ENCODE measurements at regions of chr10 and their contacts with region 1.

Region 1: GRCh38 chr10:13971601-13972475 is 358.9 kb downstream of the FRMD4A start:
- DNase-seq: no peak

Region 2: DNA sequence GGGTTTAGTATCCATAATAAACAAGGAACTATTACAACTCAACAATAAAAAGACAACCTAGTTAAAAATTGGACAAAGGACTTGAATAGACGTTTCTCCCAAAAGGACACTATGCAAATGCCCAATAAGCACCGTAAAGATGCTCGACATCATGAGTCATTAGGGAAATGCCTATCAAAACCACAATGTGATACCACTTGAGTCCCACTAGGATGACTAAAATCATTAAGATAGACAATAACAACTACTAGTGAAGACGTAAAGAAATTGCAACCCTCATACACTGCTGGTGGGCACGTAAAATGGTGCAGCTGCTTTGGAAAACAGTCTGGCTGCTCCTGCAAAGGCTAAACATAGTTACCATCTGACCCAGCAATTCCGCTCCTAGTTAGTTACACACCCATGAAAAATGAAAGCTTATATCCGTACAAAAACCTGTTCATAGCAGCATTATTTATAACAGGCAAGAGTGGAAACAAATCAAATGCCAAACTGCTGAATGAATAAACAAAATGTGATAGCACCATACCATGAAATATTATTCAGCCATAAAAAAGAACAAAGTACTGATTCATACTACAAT is 987.6 kb before region 1 on chr10:
- intact Hi-C with region 1: no loop called
- DNase-seq: no peak

Region 3: DNA sequence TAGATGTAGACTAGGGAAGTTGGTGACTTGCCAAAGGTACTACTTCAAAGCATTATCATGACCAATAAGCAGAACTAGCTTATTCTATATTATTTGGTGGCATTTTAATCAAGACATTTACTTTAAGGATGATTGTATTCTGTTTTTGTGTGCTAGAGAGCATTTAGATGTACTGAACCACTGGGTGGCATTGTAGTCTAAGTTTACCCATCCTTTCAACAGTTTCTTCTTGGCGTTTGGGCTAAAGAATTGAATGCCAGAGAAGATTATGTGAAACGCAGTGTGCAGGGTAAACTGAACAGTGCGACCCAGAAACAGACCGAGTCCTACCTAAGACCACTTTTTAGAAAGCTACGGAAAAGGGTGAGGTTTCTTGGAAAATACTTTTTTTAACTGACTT is 358.3 kb before region 1 on chr10:
- intact Hi-C with region 1: loop called (anchors 10 kb)
- DNase-seq: no peak

Region 4: GRCh38 chr10:14003517-14004184 is 31.8 kb after region 1 on chr10:
- intact Hi-C with region 1: loop called (anchors 5 kb)
- DNase-seq: no peak